OCI-LY7 (cell line): ENCODE measurements at regions of chr1 and their contacts with region 1.

Region 1: DNA sequence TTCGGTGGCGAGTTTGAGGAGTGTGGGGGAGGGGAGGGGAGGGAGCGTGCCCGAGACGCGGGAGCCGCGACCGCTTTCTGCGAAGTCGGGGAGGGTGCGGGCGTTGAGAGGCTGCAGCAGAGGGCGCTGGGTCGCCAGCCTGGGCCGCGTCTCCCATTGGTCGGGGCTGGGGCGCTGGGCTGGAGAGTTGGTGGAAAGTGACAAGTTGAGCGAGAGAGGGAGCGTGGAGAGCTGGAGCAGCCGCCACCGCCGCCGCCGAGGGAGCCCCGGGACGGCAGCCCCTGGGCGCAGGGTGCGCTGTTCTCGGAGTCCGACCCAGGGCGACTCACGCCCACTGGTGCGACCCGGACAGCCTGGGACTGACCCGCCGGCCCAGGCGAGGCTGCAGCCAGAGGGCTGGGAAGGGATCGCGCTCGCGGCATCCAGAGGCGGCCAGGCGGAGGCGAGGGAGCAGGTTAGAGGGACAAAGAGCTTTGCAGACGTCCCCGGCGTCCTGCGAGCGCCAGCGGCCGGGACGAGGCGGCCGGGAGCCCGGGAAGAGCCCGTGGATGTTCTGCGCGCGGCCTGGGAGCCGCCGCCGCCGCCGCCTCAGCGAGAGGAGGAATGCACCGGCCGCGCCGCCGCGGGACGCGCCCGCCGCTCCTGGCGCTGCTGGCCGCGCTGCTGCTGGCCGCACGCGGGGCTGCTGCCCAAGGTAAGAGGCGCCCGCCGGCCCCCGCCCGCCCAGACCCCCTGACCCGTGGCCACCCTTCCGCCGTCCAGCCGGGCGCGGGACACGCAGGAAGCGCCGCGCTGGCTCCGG is at the start of gene ROR1:
- DNase-seq: peak; percentile 73
- H3K4me3 ChIP-seq: peak within 1 kb of the TSS; percentile 67
- H3K27ac ChIP-seq: no peak within 1 kb of the TSS
- H3K4me1 ChIP-seq: peaks cover 29% of the 10 kb centered on the region
- CTCF ChIP-seq: peak; percentile 70
- total RNA-seq, gene ROR1: 0.47 and 0.85 TPM in 2 replicates

Region 2: GRCh38 chr1:63828322-63829044 is 54.5 kb after region 1 on chr1:
- CTCF ChIA-PET with region 1: interaction called, 3 read pairs
- POLR2A ChIA-PET with region 1: interaction called, 3 read pairs
- intact Hi-C with region 1: loop called (anchors 5 kb)
- DNase-seq: peak; percentile 86
- H3K4me3 ChIP-seq: peak overlapping the region; percentile 41
- H3K27ac ChIP-seq: peak overlapping the region; percentile 90
- H3K4me1 ChIP-seq: peaks cover 61% of the 10 kb centered on the region
- CTCF ChIP-seq: no peak

Region 3: GRCh38 chr1:63892632-63893395 is 118.8 kb after region 1 on chr1:
- CTCF ChIA-PET with region 1: no interaction called
- POLR2A ChIA-PET with region 1: no interaction called
- intact Hi-C with region 1: loop called (anchors 5 kb)
- DNase-seq: peak; percentile 83
- H3K4me3 ChIP-seq: no peak overlapping the region
- H3K27ac ChIP-seq: no peak overlapping the region
- H3K4me1 ChIP-seq: peaks cover 13% of the 10 kb centered on the region
- CTCF ChIP-seq: no peak

Region 4: GRCh38 chr1:64136752-64137411 is 362.9 kb after region 1 on chr1:
- CTCF ChIA-PET with region 1: no interaction called
- POLR2A ChIA-PET with region 1: no interaction called
- intact Hi-C with region 1: loop called (anchors 5 kb)
- DNase-seq: peak; percentile 63
- H3K4me3 ChIP-seq: no peak overlapping the region
- H3K27ac ChIP-seq: no peak overlapping the region
- H3K4me1 ChIP-seq: no peaks in the 10 kb centered on the region
- CTCF ChIP-seq: peak; percentile 95